OCI-LY7 (cell line): ENCODE measurements at regions of chr2 and their contacts with region 1.

Region 1: GRCh38 chr2:165305391-165306096 is 66.3 kb downstream of the SCN2A start:
- DNase-seq: no peak
- H3K4me3 ChIP-seq: no peak overlapping the region
- H3K27ac ChIP-seq: no peak overlapping the region
- H3K4me1 ChIP-seq: no peaks in the 10 kb centered on the region
- CTCF ChIP-seq: no peak

Region 2: GRCh38 chr2:165382362-165382761 is 76.8 kb after region 1 on chr2:
- CTCF ChIA-PET with region 1: no interaction called
- POLR2A ChIA-PET with region 1: no interaction called
- intact Hi-C with region 1: loop called (anchors 5 kb)
- DNase-seq: no peak
- H3K4me3 ChIP-seq: no peak overlapping the region
- H3K27ac ChIP-seq: no peak overlapping the region
- H3K4me1 ChIP-seq: no peaks in the 10 kb centered on the region
- CTCF ChIP-seq: no peak

Region 3: DNA sequence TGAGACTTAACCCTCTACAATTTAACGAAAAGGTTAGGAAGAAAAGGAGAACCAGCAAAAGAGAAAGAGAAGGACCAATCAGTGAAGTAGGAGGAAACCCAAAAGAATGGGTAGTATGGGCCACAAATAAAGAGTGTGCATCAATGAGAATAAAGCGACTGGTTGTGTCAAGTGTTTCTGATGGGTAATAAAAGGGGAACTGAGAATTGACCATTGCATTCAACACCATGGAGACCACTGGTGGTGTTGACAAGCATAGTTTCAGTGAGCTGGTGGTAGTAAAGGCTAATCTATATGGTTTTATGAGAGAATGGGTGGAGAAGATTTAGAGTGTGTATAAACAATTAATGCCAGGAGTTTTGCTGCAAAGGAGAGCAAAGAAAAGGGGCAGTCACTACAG is 239.4 kb after region 1 on chr2:
- CTCF ChIA-PET with region 1: no interaction called
- POLR2A ChIA-PET with region 1: no interaction called
- intact Hi-C with region 1: no loop called
- DNase-seq: peak; percentile 24
- H3K4me3 ChIP-seq: no peak overlapping the region
- H3K27ac ChIP-seq: no peak overlapping the region
- H3K4me1 ChIP-seq: peaks cover 3% of the 10 kb centered on the region
- CTCF ChIP-seq: no peak